ENCODE measurements at regions of chr12 and their contacts with region 1.

Region 1: GRCh38 chr12:69157023-69157655 is 82.2 kb upstream of the CPSF6 start:
- DNase-seq: peak; percentile 71 to 92 (median 82)
- ATAC-seq: peak; percentile 64 to 94 (median 90)
- H3K4me3 ChIP-seq: peak overlapping the region in 2 of 12 donors; percentile 16 to 30
- H3K27ac ChIP-seq: no peak overlapping the region
- H3K4me1 ChIP-seq: peaks cover 0 to 12% (median 0%) of the 10 kb centered on the region in 12 donors
- H3K27me3 ChIP-seq: no peaks in the 10 kb centered on the region
- CTCF ChIP-seq: peak; percentile 81 to 97 (median 89)
- POLR2A ChIP-seq: no peak

Region 2: DNA sequence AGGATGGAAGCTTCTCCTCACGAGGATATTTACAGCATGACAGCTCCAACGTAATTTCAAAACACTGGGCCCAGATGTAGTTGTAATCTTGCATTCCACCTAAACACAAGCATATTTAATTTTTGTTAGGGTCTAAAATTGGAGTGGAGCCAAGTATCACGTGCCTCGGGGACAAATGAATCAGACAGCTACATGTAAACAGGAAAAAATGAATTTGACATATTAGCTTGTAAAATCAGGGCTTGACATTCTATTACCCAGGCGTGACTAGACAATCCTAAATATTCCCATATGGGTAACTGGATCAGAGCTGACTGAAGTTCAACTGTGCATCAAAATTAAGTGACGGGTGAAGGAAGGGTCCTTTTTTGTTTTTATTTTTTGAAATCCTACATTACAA is 290.2 kb before region 1 on chr12:
- intact Hi-C with region 1: loop called in 1 of 10 experiments (anchors 10 kb)
- DNase-seq: no peak
- ATAC-seq: no peak
- H3K4me3 ChIP-seq: no peak overlapping the region
- H3K27ac ChIP-seq: no peak overlapping the region
- H3K4me1 ChIP-seq: no peaks in the 10 kb centered on the region
- H3K27me3 ChIP-seq: no peaks in the 10 kb centered on the region
- CTCF ChIP-seq: no peak
- POLR2A ChIP-seq: no peak

Region 3: GRCh38 chr12:69239352-69239921 is 82.3 kb after region 1 on chr12 and contains the start of gene CPSF6:
- intact Hi-C with region 1: loop called in 1 of 10 experiments (anchors 5 kb)
- DNase-seq: peak; percentile 97 to 99 (median 97)
- ATAC-seq: peak; percentile 99 to 100 (median 100)
- H3K4me3 ChIP-seq: peak within 1 kb of the TSS; percentile 75 to 99 (median 86)
- H3K27ac ChIP-seq: peak within 1 kb of the TSS; percentile 85 to 98 (median 93)
- H3K4me1 ChIP-seq: peaks cover 9 to 44% (median 35%) of the 10 kb centered on the region in 12 donors
- H3K27me3 ChIP-seq: no peaks in the 10 kb centered on the region
- CTCF ChIP-seq: peak in 6 of 12 donors; percentile 5 to 27 (median 14)
- POLR2A ChIP-seq: peak in 1 of 2 donors; percentile 92
- total RNA-seq, gene CPSF6: 15.8 to 34.8 (median 30.1) TPM

Region 4: DNA sequence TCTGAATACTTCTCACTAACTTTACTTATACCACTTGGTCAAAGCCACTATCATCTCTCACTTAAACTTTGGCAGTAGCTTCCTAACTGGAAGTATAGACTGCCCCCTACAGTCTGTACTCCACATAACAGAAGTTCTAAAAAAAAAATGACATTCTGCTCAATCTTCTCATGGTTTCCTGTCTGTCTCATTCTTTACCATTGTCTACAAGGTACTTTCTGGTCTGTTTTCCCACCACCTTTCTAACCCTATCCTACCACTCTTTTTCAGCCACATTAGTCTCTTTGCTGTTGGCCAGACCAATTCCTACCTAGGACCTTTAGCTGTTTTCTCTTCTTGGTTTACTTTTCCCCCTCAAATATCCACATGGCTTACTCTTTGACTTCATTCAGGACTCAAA is 96.9 kb after region 1 on chr12:
- intact Hi-C with region 1: loop called (anchors 1 to 5 kb)
- DNase-seq: no peak
- ATAC-seq: peak; percentile 42 to 57 (median 48)
- H3K4me3 ChIP-seq: no peak overlapping the region
- H3K27ac ChIP-seq: no peak overlapping the region
- H3K4me1 ChIP-seq: peaks cover 0 to 45% (median 12%) of the 10 kb centered on the region in 12 donors
- H3K27me3 ChIP-seq: no peaks in the 10 kb centered on the region
- CTCF ChIP-seq: peak; percentile 58 to 77 (median 66)
- POLR2A ChIP-seq: no peak

Region 5: DNA sequence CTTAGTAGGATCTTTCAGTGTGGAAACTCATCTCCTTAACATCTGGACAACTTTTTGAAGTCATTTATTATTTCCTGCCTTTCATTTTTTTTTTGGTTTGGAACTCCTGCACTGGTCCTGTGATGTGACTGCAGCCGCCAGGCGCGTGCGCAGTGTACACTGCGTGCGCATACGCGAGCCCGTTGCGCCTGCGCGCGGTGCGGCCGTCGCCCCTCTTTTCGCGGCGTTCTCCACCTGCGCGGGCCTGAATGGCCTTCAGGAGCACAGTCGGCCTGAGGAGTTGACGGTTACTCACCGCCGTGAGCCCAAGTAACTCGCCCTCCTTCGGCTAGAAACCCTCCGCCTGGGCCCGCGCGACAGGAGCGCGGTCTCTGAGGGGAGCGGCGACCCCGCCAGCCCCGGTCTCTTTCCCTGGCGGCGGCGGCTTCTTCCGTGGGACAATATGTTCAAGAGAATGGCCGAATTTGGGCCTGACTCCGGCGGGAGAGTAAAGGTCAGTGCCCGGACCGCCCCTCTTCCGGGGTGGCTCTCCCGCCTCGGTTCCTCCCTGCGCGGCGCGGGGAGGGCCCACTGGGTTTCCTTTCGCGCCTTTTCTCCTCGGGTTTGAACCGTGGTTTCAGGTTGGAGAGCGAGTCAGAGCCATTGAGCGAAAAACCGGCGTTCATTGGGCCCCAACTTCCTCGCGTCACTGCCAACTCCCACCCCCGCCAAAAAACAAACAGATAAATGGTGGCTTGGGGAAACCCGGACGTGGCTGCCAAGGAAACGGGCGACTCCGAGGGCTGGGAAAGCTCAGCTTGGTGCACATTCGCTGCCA is 202.6 kb after region 1 on chr12 and contains the start of gene YEATS4:
- intact Hi-C with region 1: loop called in 1 of 10 experiments (anchors 10 kb)
- DNase-seq: peak; percentile 82 to 92 (median 86)
- ATAC-seq: peak; percentile 96 to 98 (median 98)
- H3K4me3 ChIP-seq: peak within 1 kb of the TSS; percentile 52 to 93 (median 80)
- H3K27ac ChIP-seq: peak within 1 kb of the TSS; percentile 83 to 99 (median 92)
- H3K4me1 ChIP-seq: peaks cover 0 to 25% (median 9%) of the 10 kb centered on the region in 12 donors
- H3K27me3 ChIP-seq: no peaks in the 10 kb centered on the region
- CTCF ChIP-seq: no peak
- POLR2A ChIP-seq: no peak
- total RNA-seq, gene YEATS4: 6.7 to 45.0 (median 9.9) TPM

Region 6: GRCh38 chr12:69585189-69586062 is 428.3 kb after region 1 on chr12 and contains the start of gene CCT2:
- intact Hi-C with region 1: loop called in 1 of 10 experiments (anchors 10 kb)
- DNase-seq: peak; percentile 97 to 98 (median 98)
- ATAC-seq: peak; percentile 99 to 100 (median 100)
- H3K4me3 ChIP-seq: peak within 1 kb of the TSS; percentile 63 to 99 (median 82)
- H3K27ac ChIP-seq: peak within 1 kb of the TSS; percentile 66 to 92 (median 90)
- H3K4me1 ChIP-seq: peaks cover 0 to 22% (median 11%) of the 10 kb centered on the region in 12 donors
- H3K27me3 ChIP-seq: no peaks in the 10 kb centered on the region
- CTCF ChIP-seq: peak in 9 of 12 donors; percentile 10 to 49 (median 23)
- POLR2A ChIP-seq: peak in 1 of 2 donors; percentile 86
- total RNA-seq, gene CCT2: 63.2 to 168 (median 93.3) TPM

Measured in heart left ventricle (tissue), 16 donors.